Naive thymus-derived CD4-positive, alpha-beta T cell (primary cell): ENCODE measurements at regions of chr9 and their contacts with region 1.

Region 1: DNA sequence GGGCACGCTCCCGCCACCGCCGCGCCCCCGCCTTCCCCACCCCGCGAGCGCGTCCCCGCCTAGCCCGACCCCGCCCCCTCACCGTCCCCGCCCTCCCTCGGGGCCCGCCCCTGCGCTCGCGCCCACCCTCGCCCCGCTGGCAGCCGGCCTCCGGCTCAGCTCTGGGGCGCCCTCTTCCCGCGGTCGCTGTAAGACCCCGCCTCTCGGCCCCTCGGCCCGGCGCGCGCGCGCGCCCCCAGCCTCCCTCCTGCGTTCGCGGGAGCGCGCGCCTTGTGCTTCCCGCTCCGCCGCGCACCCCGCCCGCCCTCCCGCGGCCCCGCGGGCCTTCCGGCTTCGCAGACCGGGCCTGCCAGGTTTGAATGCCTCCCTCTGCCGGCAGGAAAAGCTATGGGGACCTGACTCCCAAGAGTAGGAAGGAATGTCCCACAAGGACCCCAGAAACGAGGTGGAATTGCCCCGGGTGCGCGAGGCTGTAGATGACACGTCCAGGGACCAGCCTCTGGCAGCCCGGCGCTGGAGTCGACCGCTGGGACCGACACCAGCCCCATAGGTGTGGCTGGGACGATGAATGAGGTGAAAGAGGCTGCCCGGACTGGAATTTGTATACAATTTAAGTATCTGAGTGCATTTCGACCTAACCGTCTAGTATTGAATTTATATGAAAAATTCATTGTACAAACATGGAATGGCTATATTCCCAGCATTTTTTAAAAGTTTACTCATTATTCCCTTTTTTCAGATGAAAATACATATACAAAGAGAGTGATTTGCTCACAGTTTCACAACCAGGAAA is 416 bp upstream of the PTBP3 start:
- DNase-seq: peak; percentile 78 to 94 (median 88)
- ATAC-seq: peak; percentile 94
- H3K4me3 ChIP-seq: peak overlapping the region; percentile 88
- H3K4me3 Mint-ChIP-seq: peak overlapping the region; percentile 82 to 98 (median 93)
- H3K27ac ChIP-seq: peak overlapping the region; percentile 95
- H3K27ac Mint-ChIP-seq: peak overlapping the region; percentile 88 to 97 (median 90)
- H3K4me1 ChIP-seq: peaks cover 14 to 19% of the 10 kb centered on the region in 2 donors
- H3K4me1 Mint-ChIP-seq: peaks cover 21 to 44% (median 35%) of the 10 kb centered on the region in 7 donors
- H3K27me3 ChIP-seq: no peaks in the 10 kb centered on the region
- H3K27me3 Mint-ChIP-seq: no peaks in the 10 kb centered on the region

Region 2: GRCh38 chr9:111661150-111661801 is 672.6 kb before region 1 on chr9 and contains the start of gene GNG10:
- CTCF ChIA-PET with region 1: no interaction called
- POLR2A ChIA-PET with region 1: no interaction called
- intact Hi-C with region 1: loop called in 1 of 2 experiments (anchors 2 kb)
- DNase-seq: peak; percentile 57 to 79 (median 68)
- ATAC-seq: peak; percentile 95
- H3K4me3 ChIP-seq: peak within 1 kb of the TSS; percentile 70
- H3K4me3 Mint-ChIP-seq: peak within 1 kb of the TSS; percentile 87 to 97 (median 93)
- H3K27ac ChIP-seq: peak within 1 kb of the TSS; percentile 71
- H3K27ac Mint-ChIP-seq: peak within 1 kb of the TSS; percentile 82 to 97 (median 92)
- H3K4me1 ChIP-seq: peaks cover 18 to 31% of the 10 kb centered on the region in 2 donors
- H3K4me1 Mint-ChIP-seq: peaks cover 16 to 44% (median 32%) of the 10 kb centered on the region in 7 donors
- H3K27me3 ChIP-seq: no peaks in the 10 kb centered on the region
- H3K27me3 Mint-ChIP-seq: no peaks in the 10 kb centered on the region
- total RNA-seq, gene GNG10: 5.3 to 26.1 (median 12.2) TPM

Region 3: GRCh38 chr9:111926421-111926875 is 407.4 kb before region 1 on chr9:
- CTCF ChIA-PET with region 1: no interaction called
- POLR2A ChIA-PET with region 1: no interaction called
- intact Hi-C with region 1: loop called in 1 of 2 experiments (anchors 10 kb)
- DNase-seq: peak in 7 of 9 donors; percentile 75 to 86 (median 82)
- ATAC-seq: peak; percentile 98
- H3K4me3 ChIP-seq: no peak overlapping the region
- H3K4me3 Mint-ChIP-seq: peak overlapping the region; percentile 61 to 79 (median 72)
- H3K27ac ChIP-seq: peak overlapping the region; percentile 23
- H3K27ac Mint-ChIP-seq: peak overlapping the region; percentile 79 to 94 (median 91)
- H3K4me1 ChIP-seq: peaks cover 29 to 35% of the 10 kb centered on the region in 2 donors
- H3K4me1 Mint-ChIP-seq: peaks cover 21 to 67% (median 50%) of the 10 kb centered on the region in 7 donors
- H3K27me3 ChIP-seq: no peaks in the 10 kb centered on the region
- H3K27me3 Mint-ChIP-seq: no peaks in the 10 kb centered on the region

Region 4: GRCh38 chr9:112218908-112219307 is 114.9 kb before region 1 on chr9:
- CTCF ChIA-PET with region 1: no interaction called
- POLR2A ChIA-PET with region 1: no interaction called
- intact Hi-C with region 1: loop called (anchors 5 kb)
- DNase-seq: no peak
- ATAC-seq: no peak
- H3K4me3 ChIP-seq: no peak overlapping the region
- H3K4me3 Mint-ChIP-seq: peak overlapping the region in 1 of 10 donors; percentile 70
- H3K27ac ChIP-seq: no peak overlapping the region
- H3K27ac Mint-ChIP-seq: peak overlapping the region in 8 of 9 donors; percentile 2 to 82 (median 46)
- H3K4me1 ChIP-seq: peaks cover 0 to 5% of the 10 kb centered on the region in 2 donors
- H3K4me1 Mint-ChIP-seq: peaks cover 11 to 26% (median 17%) of the 10 kb centered on the region in 7 donors
- H3K27me3 ChIP-seq: no peaks in the 10 kb centered on the region
- H3K27me3 Mint-ChIP-seq: no peaks in the 10 kb centered on the region

Region 5: DNA sequence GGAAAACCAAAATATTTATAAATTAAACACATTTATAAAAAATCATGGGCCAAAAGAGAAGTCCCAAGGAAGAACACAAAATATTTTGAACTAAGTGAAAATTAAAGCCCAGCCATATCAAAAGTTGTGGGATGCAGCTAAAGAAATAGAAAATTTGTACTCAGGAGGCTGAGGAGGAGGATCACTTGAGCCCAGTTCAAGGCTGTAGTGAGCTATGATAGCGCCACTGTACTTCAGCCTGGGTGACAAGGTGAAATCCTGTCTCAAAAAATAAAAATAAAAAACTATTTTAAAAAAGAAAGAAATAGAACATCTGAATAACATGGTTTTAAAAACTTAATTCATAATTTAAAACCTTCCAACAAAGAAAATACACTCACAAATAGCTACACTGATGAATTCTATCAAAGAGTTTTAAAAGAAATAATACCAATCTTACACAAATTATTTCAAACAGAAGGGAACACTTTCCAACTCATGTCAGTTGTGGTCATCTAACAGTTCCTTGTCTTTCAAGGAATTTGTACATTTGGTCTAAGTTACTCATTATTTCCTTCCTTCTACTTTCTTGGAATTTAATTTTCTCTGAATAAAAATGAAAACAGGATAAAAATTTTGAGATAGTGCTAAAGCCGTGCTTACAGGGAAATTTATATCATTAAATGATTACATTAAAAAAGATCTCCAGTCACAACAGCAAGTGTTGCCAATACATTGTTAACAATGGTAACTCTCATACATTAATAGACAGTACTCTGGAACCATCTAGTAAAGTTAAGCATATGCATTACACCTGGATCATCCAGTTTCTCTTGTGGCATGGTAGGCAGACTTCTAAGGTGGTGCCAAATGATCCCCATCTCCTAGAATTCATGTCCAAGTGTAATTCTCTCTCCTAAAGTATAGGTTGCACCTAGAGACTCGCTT is 18.2 kb before region 1 on chr9:
- CTCF ChIA-PET with region 1: no interaction called
- POLR2A ChIA-PET with region 1: interaction called, 4 read pairs
- intact Hi-C with region 1: loop called (anchors 1 to 2 kb)
- DNase-seq: no peak
- ATAC-seq: no peak
- H3K4me3 ChIP-seq: no peak overlapping the region
- H3K4me3 Mint-ChIP-seq: peak overlapping the region in 7 of 10 donors; percentile 34 to 70 (median 64)
- H3K27ac ChIP-seq: no peak overlapping the region
- H3K27ac Mint-ChIP-seq: peak overlapping the region in 7 of 9 donors; percentile 5 to 89 (median 51)
- H3K4me1 ChIP-seq: peaks cover 31 to 34% of the 10 kb centered on the region in 2 donors
- H3K4me1 Mint-ChIP-seq: peaks cover 55 to 94% (median 83%) of the 10 kb centered on the region in 7 donors
- H3K27me3 ChIP-seq: no peaks in the 10 kb centered on the region
- H3K27me3 Mint-ChIP-seq: no peaks in the 10 kb centered on the region

Region 6: DNA sequence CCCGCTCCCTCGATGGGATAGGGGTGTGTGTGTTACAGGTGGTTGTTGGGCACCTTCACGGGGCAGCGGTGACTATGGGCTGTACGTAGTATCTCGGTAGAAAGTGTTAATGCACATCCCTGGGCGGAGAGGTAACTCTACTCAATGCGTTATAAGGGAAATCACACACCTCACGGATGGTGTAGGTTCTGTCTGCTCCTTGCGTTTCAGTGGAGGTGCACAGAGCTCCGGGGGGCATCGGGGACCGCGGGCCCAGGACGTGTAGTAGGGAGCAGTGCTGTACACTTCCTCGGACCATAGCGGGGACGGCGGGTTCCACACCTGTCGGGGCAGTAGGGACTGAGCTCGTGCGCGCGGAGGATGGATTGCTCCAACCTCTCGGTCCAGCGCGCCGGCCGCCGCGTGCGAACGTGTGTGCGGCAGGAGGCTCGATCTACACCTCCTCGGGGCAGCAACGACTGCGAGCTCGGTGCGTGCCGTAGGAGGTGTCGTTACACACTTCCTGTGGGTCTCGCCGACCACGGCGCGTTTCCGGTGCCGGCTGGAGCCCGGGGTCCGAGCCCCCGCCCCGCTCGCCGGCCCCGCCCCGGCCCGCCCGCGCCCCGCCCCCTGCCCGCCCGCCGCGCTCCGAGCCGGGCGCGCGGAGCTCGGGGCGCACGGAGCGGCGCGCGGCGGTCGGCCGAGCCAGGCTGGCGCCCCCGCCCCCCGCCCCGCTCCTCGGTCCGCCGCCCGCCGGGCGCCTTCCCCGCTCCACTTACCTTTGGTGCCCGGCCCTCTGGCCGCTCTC is 152.6 kb after region 1 on chr9 and contains the start of gene KIAA1958:
- CTCF ChIA-PET with region 1: no interaction called
- POLR2A ChIA-PET with region 1: interaction called, 3 read pairs
- intact Hi-C with region 1: loop called (anchors 2 to 10 kb)
- DNase-seq: peak; percentile 51 to 88 (median 73)
- ATAC-seq: peak; percentile 88
- H3K4me3 ChIP-seq: peak within 1 kb of the TSS; percentile 69
- H3K4me3 Mint-ChIP-seq: peak within 1 kb of the TSS; percentile 95 to 100 (median 98)
- H3K27ac ChIP-seq: peak within 1 kb of the TSS; percentile 72
- H3K27ac Mint-ChIP-seq: peak within 1 kb of the TSS; percentile 93 to 98 (median 97)
- H3K4me1 ChIP-seq: peaks cover 4 to 6% of the 10 kb centered on the region in 2 donors
- H3K4me1 Mint-ChIP-seq: peaks cover 19 to 64% (median 49%) of the 10 kb centered on the region in 7 donors
- H3K27me3 ChIP-seq: no peaks in the 10 kb centered on the region
- H3K27me3 Mint-ChIP-seq: peaks cover 0 to 6% (median 0%) of the 10 kb centered on the region in 5 donors
- total RNA-seq, gene KIAA1958: 6.2 to 8.3 (median 7.0) TPM

Region 7: GRCh38 chr9:113221003-113221799 is 887.4 kb after region 1 on chr9 and contains the starts of genes FKBP15 and SLC31A1:
- CTCF ChIA-PET with region 1: no interaction called
- POLR2A ChIA-PET with region 1: interaction called, 3 read pairs
- intact Hi-C with region 1: loop called (anchors 1 to 2 kb)
- DNase-seq: peak; percentile 88 to 96 (median 96)
- ATAC-seq: peak; percentile 99
- H3K4me3 ChIP-seq: peak within 1 kb of the TSS; percentile 91
- H3K4me3 Mint-ChIP-seq: peak within 1 kb of the TSS; percentile 89 to 99 (median 94)
- H3K27ac ChIP-seq: peak within 1 kb of the TSS; percentile 94
- H3K27ac Mint-ChIP-seq: peak within 1 kb of the TSS; percentile 86 to 98 (median 94)
- H3K4me1 ChIP-seq: peaks cover 10 to 25% of the 10 kb centered on the region in 2 donors
- H3K4me1 Mint-ChIP-seq: peaks cover 15 to 58% (median 48%) of the 10 kb centered on the region in 7 donors
- H3K27me3 ChIP-seq: no peaks in the 10 kb centered on the region
- H3K27me3 Mint-ChIP-seq: no peaks in the 10 kb centered on the region
- total RNA-seq, gene FKBP15: 22.4 to 50.6 (median 33.4) TPM
- total RNA-seq, gene SLC31A1: 4.5 to 10.4 (median 4.7) TPM